ENCODE measurements at regions of chr5 and their contacts with region 1.

Region 1: GRCh38 chr5:172380987-172381643 is 73.2 kb downstream of the SH3PXD2B start:
- DNase-seq: peak; percentile 82
- ATAC-seq: peak; percentile 20
- H3K4me3 ChIP-seq: peak overlapping the region; percentile 30; the same call in 1 of the 2 replicates
- H3K27ac ChIP-seq: peak overlapping the region; percentile 31
- H3K4me1 ChIP-seq: peaks cover 41% of the 10 kb centered on the region
- H3K27me3 ChIP-seq: no peaks in the 10 kb centered on the region
- CTCF ChIP-seq: no peak

Region 2: GRCh38 chr5:172283020-172283861 is 97.9 kb before region 1 on chr5 and contains the start of gene UBTD2:
- CTCF ChIA-PET with region 1: no interaction called
- POLR2A ChIA-PET with region 1: no interaction called
- intact Hi-C with region 1: loop called (anchors 5 kb)
- DNase-seq: peak; percentile 74
- ATAC-seq: peak; percentile 75
- H3K4me3 ChIP-seq: peak within 1 kb of the TSS; percentile 97
- H3K27ac ChIP-seq: peak within 1 kb of the TSS; percentile 43
- H3K4me1 ChIP-seq: peaks cover 21% of the 10 kb centered on the region
- H3K27me3 ChIP-seq: no peaks in the 10 kb centered on the region
- CTCF ChIP-seq: peak; percentile 49; the same call in 1 of the 2 replicates
- total RNA-seq, gene UBTD2: 22.6 and 23.8 TPM in 2 replicates

Region 3: GRCh38 chr5:172315587-172316493 is 65.3 kb before region 1 on chr5:
- CTCF ChIA-PET with region 1: no interaction called
- POLR2A ChIA-PET with region 1: no interaction called
- intact Hi-C with region 1: loop called (anchors 5 kb)
- DNase-seq: no peak
- ATAC-seq: peak; percentile 41
- H3K4me3 ChIP-seq: peak overlapping the region; percentile 17; the same call in 1 of the 2 replicates
- H3K27ac ChIP-seq: peak overlapping the region; percentile 73
- H3K4me1 ChIP-seq: peaks cover 25% of the 10 kb centered on the region
- H3K27me3 ChIP-seq: no peaks in the 10 kb centered on the region
- CTCF ChIP-seq: no peak

Region 4: DNA sequence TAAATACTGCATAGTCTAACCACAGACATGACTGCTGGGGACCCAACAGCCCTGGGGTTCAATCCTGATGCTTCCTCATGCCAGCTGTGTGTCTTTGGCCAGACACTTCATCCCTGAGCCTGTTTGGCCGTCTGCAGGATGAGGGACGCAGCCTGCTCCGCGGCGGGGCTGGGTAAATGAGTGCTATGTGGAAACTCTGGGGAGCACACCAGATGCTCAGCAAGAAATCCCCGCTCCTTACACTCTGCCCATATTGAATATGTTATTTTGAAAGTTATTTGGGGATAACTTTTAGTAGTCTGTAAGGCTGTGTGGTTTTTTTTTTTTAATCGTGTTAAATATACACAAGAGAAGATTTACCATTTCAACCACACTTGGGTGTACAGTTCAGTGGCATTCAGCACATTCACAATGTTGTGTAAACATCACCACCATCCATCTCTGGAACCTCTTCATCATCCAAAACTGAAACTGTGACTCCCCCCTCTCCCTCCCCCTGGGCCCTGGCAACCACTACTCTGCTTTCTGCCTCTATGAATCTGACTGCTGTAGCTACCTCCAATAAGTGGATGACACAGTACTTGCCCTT is 30.5 kb after region 1 on chr5:
- CTCF ChIA-PET with region 1: no interaction called
- POLR2A ChIA-PET with region 1: interaction called, 4 read pairs
- intact Hi-C with region 1: loop called (anchors 1 kb)
- DNase-seq: no peak
- ATAC-seq: no peak
- H3K4me3 ChIP-seq: no peak overlapping the region
- H3K27ac ChIP-seq: no peak overlapping the region
- H3K4me1 ChIP-seq: peaks cover 72% of the 10 kb centered on the region
- H3K27me3 ChIP-seq: no peaks in the 10 kb centered on the region
- CTCF ChIP-seq: no peak

Region 5: DNA sequence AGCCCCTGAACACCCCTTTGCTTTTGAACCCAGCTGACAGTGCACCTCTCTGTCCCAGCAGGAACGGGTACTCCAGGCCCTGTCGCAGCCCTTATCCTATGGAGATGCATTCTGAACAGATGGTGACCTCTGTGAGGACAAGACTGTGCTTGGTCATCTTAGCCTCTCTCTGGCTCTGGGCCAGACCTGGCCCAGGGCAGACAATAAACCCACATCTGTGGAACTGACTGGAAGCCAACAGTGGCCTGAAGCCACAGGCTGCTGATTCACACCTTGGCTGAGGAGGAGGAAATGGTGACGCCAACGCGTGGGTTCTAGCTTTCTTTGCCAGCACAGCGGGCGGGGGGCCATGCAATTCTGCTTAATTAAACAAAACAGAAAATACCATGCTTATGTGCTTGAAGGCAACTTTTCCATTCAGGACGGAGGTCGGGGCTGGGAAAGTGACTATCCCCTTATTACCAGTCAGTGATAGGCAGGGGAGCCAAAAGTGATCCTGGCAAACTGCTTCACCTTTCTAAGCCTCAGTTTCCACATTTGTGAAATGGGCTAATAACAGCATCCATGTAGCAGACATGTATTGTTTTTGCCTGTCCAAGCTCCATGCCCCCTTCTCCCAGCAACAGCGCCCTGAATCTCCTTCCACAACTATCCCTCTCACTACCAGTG is 62.5 kb after region 1 on chr5:
- CTCF ChIA-PET with region 1: no interaction called
- POLR2A ChIA-PET with region 1: no interaction called
- intact Hi-C with region 1: no loop called
- DNase-seq: peak; percentile 95
- ATAC-seq: peak; percentile 88
- H3K4me3 ChIP-seq: no peak overlapping the region
- H3K27ac ChIP-seq: no peak overlapping the region
- H3K4me1 ChIP-seq: peaks cover 14% of the 10 kb centered on the region
- H3K27me3 ChIP-seq: no peaks in the 10 kb centered on the region
- CTCF ChIP-seq: no peak